ENCODE measurements at regions of chr1 and their contacts with region 1.

Region 1: GRCh38 chr1:234656856-234657654 is 47.1 kb upstream of the IRF2BP2 start:
- DNase-seq: peak; percentile 97
- ATAC-seq: peak; percentile 89
- H3K4me3 ChIP-seq: peak overlapping the region; percentile 45
- H3K27ac ChIP-seq: peak overlapping the region; percentile 95
- H3K4me1 ChIP-seq: peaks cover 54% of the 10 kb centered on the region
- H3K27me3 ChIP-seq: no peaks in the 10 kb centered on the region
- CTCF ChIP-seq: no peak

Region 2: DNA sequence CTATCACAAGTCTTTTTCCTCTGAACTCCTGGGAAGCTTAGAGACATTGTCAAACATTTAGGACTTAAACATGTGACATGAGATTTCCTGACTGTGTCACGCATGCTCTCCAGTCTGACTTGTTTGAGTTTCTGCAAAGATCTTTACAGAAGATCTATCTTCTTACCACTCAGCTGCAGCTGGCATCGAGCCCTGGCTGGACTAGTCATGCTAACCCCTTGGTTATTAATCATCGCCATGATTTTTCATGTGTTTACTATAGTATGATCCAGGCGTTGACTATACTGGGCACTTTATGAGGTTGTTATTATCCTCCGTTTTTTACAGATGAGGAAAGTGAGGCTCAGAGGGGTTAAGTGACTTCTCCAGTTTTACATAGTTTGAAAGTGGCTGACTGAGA is 29.0 kb before region 1 on chr1:
- CTCF ChIA-PET with region 1: no interaction called
- POLR2A ChIA-PET with region 1: no interaction called
- intact Hi-C with region 1: loop called (anchors 2 kb)
- DNase-seq: peak; percentile 95
- ATAC-seq: peak; percentile 81
- H3K4me3 ChIP-seq: no peak overlapping the region
- H3K27ac ChIP-seq: peak overlapping the region; percentile 92
- H3K4me1 ChIP-seq: peaks cover 44% of the 10 kb centered on the region
- H3K27me3 ChIP-seq: no peaks in the 10 kb centered on the region
- CTCF ChIP-seq: no peak

Measured in PC-3 (cell line).